ENCODE measurements at regions of chr21 and their contacts with region 1.

Region 1: GRCh38 chr21:41121785-41122421 is 46.1 kb upstream of the BACE2 start:
- DNase-seq: peak; percentile 90
- ATAC-seq: peak; percentile 93
- H3K4me3 Mint-ChIP-seq: no peak overlapping the region
- H3K27ac Mint-ChIP-seq: no peak overlapping the region
- H3K4me1 Mint-ChIP-seq: peaks cover 3% of the 10 kb centered on the region; the same call in 1 of the 2 replicates
- H3K27me3 Mint-ChIP-seq: peaks cover 5% of the 10 kb centered on the region; the same call in 1 of the 2 replicates
- CTCF ChIP-seq: peak; percentile 82

Region 2: GRCh38 chr21:41133896-41134522 is 12.1 kb after region 1 on chr21:
- CTCF ChIA-PET with region 1: interaction called, 20 read pairs
- POLR2A ChIA-PET with region 1: no interaction called
- DNase-seq: no peak
- ATAC-seq: peak; percentile 70
- H3K4me3 Mint-ChIP-seq: no peak overlapping the region
- H3K27ac Mint-ChIP-seq: no peak overlapping the region
- H3K4me1 Mint-ChIP-seq: no peaks in the 10 kb centered on the region
- H3K27me3 Mint-ChIP-seq: peaks cover 3% of the 10 kb centered on the region; the same call in 1 of the 2 replicates
- CTCF ChIP-seq: no peak; the same call in 1 of the 2 replicates

Region 3: DNA sequence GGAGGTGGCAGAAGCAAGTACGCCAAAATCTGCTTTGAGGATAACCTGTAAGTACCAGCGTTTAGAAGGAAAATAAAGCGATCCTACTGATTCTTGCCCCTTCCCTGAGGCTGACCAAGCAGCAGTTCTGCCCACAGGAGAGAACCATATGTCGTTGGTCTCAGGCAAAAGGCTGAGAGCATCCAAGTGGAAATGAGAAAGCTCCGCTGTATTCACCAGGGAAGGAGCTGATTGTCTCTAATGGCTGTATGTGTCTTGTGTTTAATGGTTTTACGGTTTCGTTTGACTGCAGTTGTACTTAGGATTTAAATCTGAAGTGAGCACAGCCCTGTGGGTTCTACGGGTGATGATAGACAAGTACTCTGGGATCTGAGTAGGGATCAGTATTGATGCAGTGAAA is 216.6 kb after region 1 on chr21:
- CTCF ChIA-PET with region 1: no interaction called
- POLR2A ChIA-PET with region 1: no interaction called
- DNase-seq: no peak
- ATAC-seq: no peak
- H3K4me3 Mint-ChIP-seq: no peak overlapping the region
- H3K27ac Mint-ChIP-seq: no peak overlapping the region
- H3K4me1 Mint-ChIP-seq: peaks cover 4% of the 10 kb centered on the region; the same call in 1 of the 2 replicates
- H3K27me3 Mint-ChIP-seq: peaks cover 3% of the 10 kb centered on the region; the same call in 1 of the 2 replicates
- CTCF ChIP-seq: no peak

Measured in WTC11 (cell line).